ENCODE measurements at regions of chr15 and their contacts with region 1.

Region 1: DNA sequence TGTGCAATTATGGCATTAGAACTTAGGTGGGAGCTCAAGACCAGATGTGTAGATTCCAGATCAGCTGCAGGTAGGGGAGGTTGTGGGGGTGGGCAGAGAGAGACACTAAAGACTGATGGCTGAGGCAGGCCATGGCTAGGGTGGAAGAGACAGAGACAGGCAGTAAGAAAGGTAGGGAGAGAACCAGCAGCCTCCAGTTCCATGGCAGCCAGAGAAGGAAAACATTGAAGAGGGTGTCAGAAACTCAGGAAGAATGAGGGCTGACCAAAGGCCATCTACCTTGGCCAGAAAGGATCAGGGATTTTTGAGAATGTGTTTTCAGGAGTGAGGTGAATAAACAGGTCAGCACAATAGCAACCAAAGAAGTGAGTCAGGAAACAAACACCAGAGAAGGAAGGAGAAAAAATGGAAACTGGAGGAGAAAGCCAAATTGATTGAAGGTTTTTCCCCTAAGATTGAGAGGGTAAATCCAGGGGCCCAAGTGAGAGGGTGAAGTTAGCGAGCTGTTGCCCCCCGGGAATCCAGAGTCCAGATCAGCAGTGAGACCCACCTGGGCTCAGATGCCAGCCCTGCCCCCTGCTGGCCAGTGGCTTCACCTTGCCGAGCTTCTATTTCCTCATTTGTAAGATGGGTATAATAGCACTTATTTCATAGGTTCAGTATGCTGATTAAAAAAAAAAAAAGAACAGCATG is 41.0 kb downstream of the ABHD2 start:
- DNase-seq: peak; percentile 43 to 78
- ATAC-seq: peak in 1 of 3 donors; percentile 6
- H3K4me3 ChIP-seq: no peak overlapping the region
- H3K4me3 Mint-ChIP-seq: no peak overlapping the region
- H3K27ac ChIP-seq: peak overlapping the region; percentile 94
- H3K27ac Mint-ChIP-seq: no peak overlapping the region
- H3K4me1 ChIP-seq: peaks cover 56% of the 10 kb centered on the region
- H3K4me1 Mint-ChIP-seq: peaks cover 27 to 39% of the 10 kb centered on the region in 2 donors
- H3K27me3 ChIP-seq: no peaks in the 10 kb centered on the region
- H3K27me3 Mint-ChIP-seq: no peaks in the 10 kb centered on the region
- CTCF ChIP-seq: peak; percentile 50

Region 2: GRCh38 chr15:88800026-88800425 is 329.2 kb before region 1 on chr15:
- intact Hi-C with region 1: no loop called
- DNase-seq: no peak
- ATAC-seq: no peak
- H3K4me3 ChIP-seq: no peak overlapping the region
- H3K4me3 Mint-ChIP-seq: no peak overlapping the region
- H3K27ac ChIP-seq: no peak overlapping the region
- H3K27ac Mint-ChIP-seq: no peak overlapping the region
- H3K4me1 ChIP-seq: no peaks in the 10 kb centered on the region
- H3K4me1 Mint-ChIP-seq: peaks cover 0 to 4% of the 10 kb centered on the region in 2 donors
- H3K27me3 ChIP-seq: peaks cover 13% of the 10 kb centered on the region
- H3K27me3 Mint-ChIP-seq: peaks cover 62 to 87% of the 10 kb centered on the region in 2 donors
- CTCF ChIP-seq: no peak

Region 3: DNA sequence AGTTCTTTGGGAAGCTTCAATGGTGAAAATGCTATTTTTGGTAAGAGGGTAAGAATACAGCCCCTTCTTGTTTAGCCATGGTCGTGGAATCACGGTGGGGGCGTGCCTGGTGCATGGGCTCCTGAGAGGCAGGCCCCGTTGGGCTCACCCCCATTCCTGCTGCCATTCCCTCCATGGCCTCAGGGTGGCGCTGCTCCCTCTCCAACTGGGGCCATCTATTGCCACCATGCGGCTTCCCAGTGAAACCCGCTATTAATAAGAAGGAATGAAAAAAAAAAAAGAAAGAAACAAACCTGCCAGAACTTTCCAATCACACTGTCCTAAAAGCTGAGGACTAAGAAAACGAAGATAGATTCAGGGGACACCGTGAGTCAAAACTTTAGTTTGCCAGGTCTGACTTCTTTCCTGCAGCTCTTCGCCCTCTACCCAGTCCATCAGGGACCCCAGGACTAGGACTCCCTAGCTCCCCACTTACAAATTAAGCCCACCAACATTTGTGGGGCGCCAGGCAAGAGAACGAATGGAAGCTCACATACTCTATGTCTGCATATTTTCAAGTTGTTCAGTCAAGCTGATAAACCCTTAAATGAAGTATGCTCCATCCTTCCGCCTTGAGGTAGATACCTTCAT is 71.7 kb before region 1 on chr15:
- intact Hi-C with region 1: loop called (anchors 2 kb)
- DNase-seq: peak; percentile 89
- ATAC-seq: peak; percentile 95 to 100 (median 100)
- H3K4me3 ChIP-seq: no peak overlapping the region
- H3K4me3 Mint-ChIP-seq: no peak overlapping the region
- H3K27ac ChIP-seq: no peak overlapping the region
- H3K27ac Mint-ChIP-seq: no peak overlapping the region
- H3K4me1 ChIP-seq: peaks cover 9% of the 10 kb centered on the region
- H3K4me1 Mint-ChIP-seq: peaks cover 8 to 10% of the 10 kb centered on the region in 2 donors
- H3K27me3 ChIP-seq: no peaks in the 10 kb centered on the region
- H3K27me3 Mint-ChIP-seq: no peaks in the 10 kb centered on the region
- CTCF ChIP-seq: peak; percentile 99

Region 4: DNA sequence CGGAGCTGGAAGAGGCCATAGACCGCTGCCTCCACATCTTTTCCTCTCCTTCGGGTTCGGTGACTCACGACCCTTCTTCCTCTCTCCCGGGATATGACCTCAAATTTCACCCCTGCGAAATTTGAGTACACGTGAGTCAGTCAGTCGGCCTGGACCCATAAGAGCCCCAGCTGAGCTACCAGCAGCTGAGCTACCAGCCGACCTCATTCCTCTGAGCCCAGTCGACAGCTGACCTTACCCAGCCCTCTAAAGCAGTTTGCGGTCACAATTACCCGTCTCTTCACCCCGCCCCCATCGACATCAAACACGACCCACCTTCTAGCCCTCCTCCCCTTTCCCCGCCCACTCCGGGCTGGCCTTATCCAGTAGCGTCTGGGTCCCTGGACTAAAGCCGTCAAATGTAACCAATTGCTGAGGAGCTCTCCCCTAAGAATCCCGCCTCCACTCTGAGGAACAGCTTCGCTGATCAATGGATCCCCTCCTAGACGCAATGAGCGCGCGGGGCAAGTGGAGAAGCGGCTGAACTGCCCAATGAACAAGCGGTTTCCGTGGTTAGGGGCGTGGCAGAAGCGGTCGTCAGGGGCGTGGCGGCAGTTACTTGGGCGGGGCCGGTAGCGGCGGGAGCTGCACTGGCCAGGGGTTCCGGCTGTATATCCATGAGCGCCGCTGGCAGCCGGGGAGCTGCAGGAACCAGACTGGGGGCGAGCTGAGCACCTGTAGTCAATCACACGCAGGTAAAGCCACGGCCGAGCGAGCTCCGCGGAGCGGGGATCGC is 41.3 kb before region 1 on chr15 and contains the start of gene ABHD2:
- intact Hi-C with region 1: loop called (anchors 1 kb)
- DNase-seq: peak; percentile 98 to 99
- ATAC-seq: peak; percentile 89 to 98 (median 94)
- H3K4me3 ChIP-seq: peak within 1 kb of the TSS; percentile 98
- H3K4me3 Mint-ChIP-seq: no peak within 1 kb of the TSS
- H3K27ac ChIP-seq: peak within 1 kb of the TSS; percentile 82
- H3K27ac Mint-ChIP-seq: no peak within 1 kb of the TSS
- H3K4me1 ChIP-seq: peaks cover 39% of the 10 kb centered on the region
- H3K4me1 Mint-ChIP-seq: peaks cover 38 to 39% of the 10 kb centered on the region in 2 donors
- H3K27me3 ChIP-seq: no peaks in the 10 kb centered on the region
- H3K27me3 Mint-ChIP-seq: no peaks in the 10 kb centered on the region
- CTCF ChIP-seq: no peak
- total RNA-seq, gene ABHD2: 187 to 236 (median 191) TPM

Region 5: GRCh38 chr15:89101302-89102191 is 27.7 kb before region 1 on chr15:
- intact Hi-C with region 1: loop called (anchors 1 kb)
- DNase-seq: no peak
- ATAC-seq: peak; percentile 84 to 92 (median 86)
- H3K4me3 ChIP-seq: no peak overlapping the region
- H3K4me3 Mint-ChIP-seq: peak overlapping the region; percentile 68
- H3K27ac ChIP-seq: peak overlapping the region; percentile 48
- H3K27ac Mint-ChIP-seq: peak overlapping the region; percentile 19 to 89
- H3K4me1 ChIP-seq: peaks cover 18% of the 10 kb centered on the region
- H3K4me1 Mint-ChIP-seq: peaks cover 48 to 53% of the 10 kb centered on the region in 2 donors
- H3K27me3 ChIP-seq: no peaks in the 10 kb centered on the region
- H3K27me3 Mint-ChIP-seq: no peaks in the 10 kb centered on the region
- CTCF ChIP-seq: no peak

Region 6: GRCh38 chr15:89143503-89144162 is 14.4 kb after region 1 on chr15:
- intact Hi-C with region 1: loop called (anchors 1 kb)
- DNase-seq: peak in 1 of 2 donors; percentile 50
- ATAC-seq: peak; percentile 78 to 88 (median 84)
- H3K4me3 ChIP-seq: no peak overlapping the region
- H3K4me3 Mint-ChIP-seq: peak overlapping the region; percentile 58
- H3K27ac ChIP-seq: peak overlapping the region; percentile 48
- H3K27ac Mint-ChIP-seq: peak overlapping the region in 1 of 2 donors; percentile 95
- H3K4me1 ChIP-seq: peaks cover 55% of the 10 kb centered on the region
- H3K4me1 Mint-ChIP-seq: peaks cover 67 to 70% of the 10 kb centered on the region in 2 donors
- H3K27me3 ChIP-seq: no peaks in the 10 kb centered on the region
- H3K27me3 Mint-ChIP-seq: no peaks in the 10 kb centered on the region
- CTCF ChIP-seq: no peak

Region 7: DNA sequence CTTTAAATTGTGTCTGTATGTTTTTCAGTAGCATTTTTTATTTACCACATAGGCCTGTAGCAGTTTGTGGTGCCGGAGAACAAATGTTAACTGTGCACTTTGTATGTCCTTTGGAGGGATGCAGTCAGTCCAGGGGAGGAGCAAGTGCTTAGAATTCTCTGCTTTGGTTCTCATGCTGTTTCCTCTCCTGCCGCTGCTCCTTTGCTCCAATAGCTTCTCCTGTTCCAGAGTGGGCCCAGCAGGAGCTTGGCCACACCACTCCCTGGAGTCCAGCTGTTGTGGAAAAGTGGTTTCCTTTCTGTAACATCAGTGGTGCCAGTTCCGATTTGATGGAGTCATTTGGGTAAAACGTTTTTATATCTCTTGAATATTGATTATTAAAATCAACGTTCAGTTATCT is 462.6 kb after region 1 on chr15:
- intact Hi-C with region 1: no loop called
- DNase-seq: no peak
- ATAC-seq: no peak
- H3K4me3 ChIP-seq: no peak overlapping the region
- H3K4me3 Mint-ChIP-seq: no peak overlapping the region
- H3K27ac ChIP-seq: no peak overlapping the region
- H3K27ac Mint-ChIP-seq: no peak overlapping the region
- H3K4me1 ChIP-seq: no peaks in the 10 kb centered on the region
- H3K4me1 Mint-ChIP-seq: no peaks in the 10 kb centered on the region
- H3K27me3 ChIP-seq: no peaks in the 10 kb centered on the region
- H3K27me3 Mint-ChIP-seq: no peaks in the 10 kb centered on the region
- CTCF ChIP-seq: no peak

Measured in natural killer cell (primary cell).